GM10248 (cell line): ENCODE measurements at regions of chr11 and their contacts with region 1.

Region 1: DNA sequence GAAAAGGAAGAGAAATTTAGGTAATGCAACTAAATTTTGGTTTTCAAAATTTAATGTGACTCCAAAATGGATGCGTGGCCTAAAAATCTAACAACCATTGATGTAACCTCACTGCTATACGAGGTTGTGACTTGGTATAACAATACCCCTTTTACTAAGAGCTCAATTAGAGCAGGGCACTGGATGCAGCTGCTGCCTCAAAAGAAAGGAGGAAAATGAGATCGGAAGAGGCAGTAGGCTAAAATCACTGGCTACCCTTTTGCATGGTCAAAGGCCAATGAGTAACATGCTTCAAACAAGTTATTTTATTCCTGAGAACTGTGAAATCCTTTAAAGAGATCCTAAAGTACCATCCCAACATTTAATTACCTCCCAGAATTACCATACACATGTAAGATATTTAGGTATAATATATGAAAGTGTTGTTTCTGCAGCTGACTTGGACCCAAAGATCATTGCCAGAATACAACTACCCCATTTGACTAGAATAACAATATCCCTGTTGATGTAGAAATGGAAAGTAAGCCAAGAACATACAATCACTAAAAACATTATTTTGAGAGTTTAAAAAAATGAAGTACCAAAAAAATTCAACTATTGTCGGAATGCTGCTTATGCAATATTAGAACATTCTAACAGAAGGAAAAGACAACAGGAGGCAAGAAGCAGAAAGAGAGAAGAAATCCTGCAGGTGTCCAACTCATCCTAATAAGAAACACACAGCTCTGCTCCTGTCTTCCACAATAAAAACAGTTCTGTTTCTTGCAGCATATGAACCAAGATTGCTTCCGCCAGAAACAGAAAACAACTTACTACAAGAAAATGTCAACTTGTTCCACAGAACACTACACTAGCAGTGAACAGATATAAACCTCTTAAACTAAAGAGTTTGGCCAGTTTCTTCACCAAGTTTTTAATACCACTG is 15.0 kb downstream of the SIK3 start:
- DNase-seq: no peak
- CTCF ChIP-seq: no peak

Region 2: GRCh38 chr11:117072517-117073461 is 10.5 kb before region 1 on chr11:
- CTCF ChIA-PET with region 1: interaction called, 14 read pairs
- POLR2A ChIA-PET with region 1: interaction called, 3 read pairs
- DNase-seq: peak; percentile 36
- CTCF ChIP-seq: no peak

Region 3: DNA sequence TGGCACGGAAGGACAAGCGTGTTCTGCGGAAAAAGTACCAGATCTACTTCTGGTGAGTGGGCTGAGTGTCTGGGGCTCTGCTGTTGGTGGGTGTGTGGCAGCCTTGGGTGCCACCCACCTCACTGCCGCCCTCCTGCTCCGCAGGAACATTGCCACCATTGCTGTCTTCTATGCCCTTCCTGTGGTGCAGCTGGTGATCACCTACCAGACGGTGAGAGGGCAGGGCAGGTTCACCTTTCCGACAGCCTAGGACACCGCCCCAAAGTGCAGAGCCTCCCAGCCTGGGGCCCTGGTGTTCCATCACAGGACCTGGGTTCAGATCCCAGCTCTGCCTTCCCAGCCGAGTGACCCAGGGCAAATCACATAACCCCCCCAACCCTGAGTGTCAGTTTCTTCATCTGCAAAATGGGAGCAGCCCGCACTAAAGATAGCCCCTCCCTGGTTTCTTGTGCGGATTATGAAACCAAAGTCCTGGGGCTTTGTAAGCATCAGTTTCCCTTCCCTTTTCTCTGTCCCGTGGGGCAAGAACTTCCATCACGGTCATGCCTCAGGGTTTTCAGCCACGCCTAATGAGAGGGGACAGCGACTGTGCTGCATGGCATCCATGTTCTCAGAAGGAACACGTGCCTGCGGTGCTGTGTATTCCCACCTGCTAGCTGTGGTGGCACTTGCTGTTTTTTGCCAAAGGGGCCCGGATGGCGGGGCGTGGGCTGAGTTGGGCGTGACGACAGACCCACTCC is 106.1 kb after region 1 on chr11:
- CTCF ChIA-PET with region 1: no interaction called
- POLR2A ChIA-PET with region 1: no interaction called
- DNase-seq: peak; percentile 68
- CTCF ChIP-seq: no peak